Naive thymus-derived CD4-positive, alpha-beta T cell (primary cell): ENCODE measurements at regions of chrX and their contacts with region 1.

Region 1: DNA sequence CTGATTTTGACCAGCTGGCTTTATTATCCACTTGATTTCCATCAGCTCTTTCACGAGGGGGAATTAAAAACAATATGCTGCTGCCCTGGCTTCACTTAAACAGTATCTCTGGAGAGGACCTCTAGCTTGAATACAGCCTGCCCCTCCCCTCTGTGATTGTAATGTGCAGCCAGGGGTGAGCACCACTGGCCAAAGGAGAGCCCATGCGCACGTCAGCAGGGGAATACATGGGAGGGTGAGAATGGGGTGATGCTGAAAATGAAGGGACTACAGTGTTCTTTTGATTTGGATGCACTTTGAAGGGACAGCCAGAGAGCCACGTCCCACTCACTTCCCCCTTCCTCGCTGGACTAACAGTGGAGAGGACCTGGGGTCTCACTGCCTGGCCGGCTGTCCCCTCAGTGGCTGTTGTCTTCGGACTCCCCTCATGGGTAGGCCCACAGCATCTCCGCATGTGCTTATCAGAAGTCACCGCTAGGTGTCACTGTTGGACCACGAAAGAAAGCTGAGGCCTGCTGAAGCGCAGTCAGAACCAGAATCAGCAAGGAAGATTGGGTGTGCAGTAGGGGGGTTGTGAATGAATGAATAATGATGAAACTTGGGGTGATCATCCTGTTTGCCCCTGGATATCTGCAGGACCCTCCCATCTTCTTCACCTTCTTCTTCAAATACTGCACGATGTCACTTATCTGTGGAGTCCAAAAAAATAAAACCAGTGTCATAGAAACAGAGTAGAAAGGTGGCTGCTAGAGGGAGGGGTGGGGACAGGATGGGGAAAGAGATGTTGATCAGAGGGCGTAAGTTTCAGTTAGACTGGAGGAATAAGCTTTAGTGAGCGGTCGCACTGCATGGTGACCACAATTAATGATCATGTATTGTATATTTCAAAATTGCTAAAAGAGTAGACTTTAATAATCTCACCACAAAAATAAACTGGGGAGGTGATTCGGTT is 32.8 kb downstream of the CLCN4 start:
- DNase-seq: peak; percentile 35 to 78 (median 64)
- ATAC-seq: peak; percentile 77
- H3K4me3 ChIP-seq: no peak overlapping the region
- H3K4me3 Mint-ChIP-seq: no peak overlapping the region
- H3K27ac ChIP-seq: no peak overlapping the region
- H3K27ac Mint-ChIP-seq: peak overlapping the region in 1 of 9 donors; percentile 28
- H3K4me1 ChIP-seq: no peaks in the 10 kb centered on the region
- H3K4me1 Mint-ChIP-seq: peaks cover 0 to 4% (median 0%) of the 10 kb centered on the region in 7 donors
- H3K27me3 ChIP-seq: no peaks in the 10 kb centered on the region
- H3K27me3 Mint-ChIP-seq: peaks cover 0 to 13% (median 4%) of the 10 kb centered on the region in 5 donors

Region 2: DNA sequence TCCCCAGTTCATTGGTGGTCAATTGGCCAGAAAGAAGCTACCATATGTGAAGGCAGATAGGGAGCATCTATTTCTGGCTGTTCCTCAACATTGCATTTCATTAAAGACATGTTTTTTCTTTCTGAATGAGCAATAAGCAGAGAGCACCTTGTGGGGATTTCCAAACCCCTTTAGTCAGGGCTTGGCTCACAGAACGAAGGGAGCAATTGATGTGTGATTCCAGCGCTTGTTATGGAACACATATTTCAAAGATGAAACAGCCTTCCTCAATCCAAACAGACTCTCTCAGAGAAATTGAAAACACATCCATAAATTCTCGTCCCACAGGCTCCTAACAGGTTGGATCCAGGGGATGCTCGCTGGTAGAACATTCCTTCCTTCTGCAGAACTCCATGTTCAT is 51.3 kb after region 1 on chrX:
- CTCF ChIA-PET with region 1: no interaction called
- POLR2A ChIA-PET with region 1: no interaction called
- intact Hi-C with region 1: no loop called
- DNase-seq: no peak
- ATAC-seq: no peak
- H3K4me3 ChIP-seq: no peak overlapping the region
- H3K4me3 Mint-ChIP-seq: no peak overlapping the region
- H3K27ac ChIP-seq: no peak overlapping the region
- H3K27ac Mint-ChIP-seq: no peak overlapping the region
- H3K4me1 ChIP-seq: no peaks in the 10 kb centered on the region
- H3K4me1 Mint-ChIP-seq: no peaks in the 10 kb centered on the region
- H3K27me3 ChIP-seq: no peaks in the 10 kb centered on the region
- H3K27me3 Mint-ChIP-seq: peaks cover 0 to 6% (median 0%) of the 10 kb centered on the region in 5 donors

Region 3: DNA sequence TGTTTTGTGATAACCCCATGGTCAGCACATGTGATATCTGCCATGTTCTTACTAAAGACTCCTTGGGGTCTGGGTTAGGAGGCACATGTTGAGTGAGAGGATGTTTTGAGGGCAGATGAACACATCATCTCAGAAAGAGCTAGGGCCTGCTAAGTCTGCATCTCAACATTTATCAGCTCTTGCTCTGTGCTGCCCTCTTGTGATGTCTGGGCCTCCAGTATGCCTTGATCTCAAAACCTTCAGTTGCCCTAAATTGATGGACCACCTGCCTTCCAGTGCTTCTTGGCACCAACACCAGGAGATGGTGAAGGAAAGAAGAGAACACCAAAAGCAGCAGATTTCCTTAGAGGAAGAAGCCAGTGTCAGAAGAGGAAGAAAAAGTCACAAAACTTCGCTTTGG is 408.3 kb after region 1 on chrX:
- CTCF ChIA-PET with region 1: no interaction called
- POLR2A ChIA-PET with region 1: no interaction called
- intact Hi-C with region 1: loop called in 1 of 2 experiments (anchors 1 kb)
- DNase-seq: no peak
- ATAC-seq: no peak
- H3K4me3 ChIP-seq: no peak overlapping the region
- H3K4me3 Mint-ChIP-seq: no peak overlapping the region
- H3K27ac ChIP-seq: no peak overlapping the region
- H3K27ac Mint-ChIP-seq: no peak overlapping the region
- H3K4me1 ChIP-seq: no peaks in the 10 kb centered on the region
- H3K4me1 Mint-ChIP-seq: no peaks in the 10 kb centered on the region
- H3K27me3 ChIP-seq: peaks cover 0 to 3% of the 10 kb centered on the region in 2 donors
- H3K27me3 Mint-ChIP-seq: no peaks in the 10 kb centered on the region

Region 4: GRCh38 chrX:10615931-10616775 is 426.6 kb after region 1 on chrX:
- CTCF ChIA-PET with region 1: no interaction called
- POLR2A ChIA-PET with region 1: no interaction called
- intact Hi-C with region 1: loop called (anchors 1 to 5 kb)
- DNase-seq: no peak
- ATAC-seq: no peak
- H3K4me3 ChIP-seq: no peak overlapping the region
- H3K4me3 Mint-ChIP-seq: no peak overlapping the region
- H3K27ac ChIP-seq: no peak overlapping the region
- H3K27ac Mint-ChIP-seq: no peak overlapping the region
- H3K4me1 ChIP-seq: no peaks in the 10 kb centered on the region
- H3K4me1 Mint-ChIP-seq: peaks cover 4 to 18% (median 11%) of the 10 kb centered on the region in 7 donors
- H3K27me3 ChIP-seq: no peaks in the 10 kb centered on the region
- H3K27me3 Mint-ChIP-seq: peaks cover 20 to 37% (median 23%) of the 10 kb centered on the region in 5 donors

Region 5: GRCh38 chrX:10722851-10723250 is 533.3 kb after region 1 on chrX:
- CTCF ChIA-PET with region 1: interaction called, 6 read pairs
- POLR2A ChIA-PET with region 1: no interaction called
- intact Hi-C with region 1: loop called in 1 of 2 experiments (anchors 1 kb)
- DNase-seq: peak in 6 of 9 donors; percentile 0 to 22 (median 16)
- ATAC-seq: no peak
- H3K4me3 ChIP-seq: no peak overlapping the region
- H3K4me3 Mint-ChIP-seq: no peak overlapping the region
- H3K27ac ChIP-seq: no peak overlapping the region
- H3K27ac Mint-ChIP-seq: no peak overlapping the region
- H3K4me1 ChIP-seq: no peaks in the 10 kb centered on the region
- H3K4me1 Mint-ChIP-seq: no peaks in the 10 kb centered on the region
- H3K27me3 ChIP-seq: no peaks in the 10 kb centered on the region
- H3K27me3 Mint-ChIP-seq: no peaks in the 10 kb centered on the region

Region 6: DNA sequence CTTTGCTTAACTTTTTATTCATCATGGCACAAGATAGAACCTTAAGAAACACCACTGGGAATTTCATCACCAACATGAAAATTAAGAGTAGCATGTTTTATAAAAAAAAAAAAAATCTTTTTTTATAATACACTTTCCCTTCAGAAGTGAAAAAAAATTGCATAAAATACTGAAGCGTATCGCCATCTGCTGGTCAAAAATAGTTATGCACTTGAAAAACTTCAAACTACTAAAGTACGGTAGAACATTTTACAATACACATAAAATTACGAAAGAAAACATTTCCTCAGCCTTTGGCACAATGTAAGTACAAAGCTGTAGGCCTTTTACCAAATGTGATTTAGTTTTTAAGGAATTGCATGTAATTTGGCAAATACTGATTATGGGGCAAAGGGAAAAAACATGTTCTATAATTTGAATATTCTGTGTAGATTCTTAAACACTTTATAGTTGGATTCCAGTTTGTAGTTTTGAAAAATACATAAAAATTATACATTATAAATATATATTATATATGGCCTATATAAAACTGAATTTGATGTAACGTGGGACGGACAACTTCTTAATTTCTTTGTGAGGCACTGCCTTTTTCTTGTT is 948.0 kb after region 1 on chrX:
- CTCF ChIA-PET with region 1: interaction called, 18 read pairs
- POLR2A ChIA-PET with region 1: no interaction called
- intact Hi-C with region 1: loop called in 1 of 2 experiments (anchors 1 kb)
- DNase-seq: peak in 5 of 9 donors; percentile 21 to 33 (median 29)
- ATAC-seq: no peak
- H3K4me3 ChIP-seq: no peak overlapping the region
- H3K4me3 Mint-ChIP-seq: no peak overlapping the region
- H3K27ac ChIP-seq: no peak overlapping the region
- H3K27ac Mint-ChIP-seq: no peak overlapping the region
- H3K4me1 ChIP-seq: no peaks in the 10 kb centered on the region
- H3K4me1 Mint-ChIP-seq: peaks cover 0 to 4% (median 0%) of the 10 kb centered on the region in 7 donors
- H3K27me3 ChIP-seq: no peaks in the 10 kb centered on the region
- H3K27me3 Mint-ChIP-seq: peaks cover 0 to 6% (median 4%) of the 10 kb centered on the region in 5 donors

Region 7: DNA sequence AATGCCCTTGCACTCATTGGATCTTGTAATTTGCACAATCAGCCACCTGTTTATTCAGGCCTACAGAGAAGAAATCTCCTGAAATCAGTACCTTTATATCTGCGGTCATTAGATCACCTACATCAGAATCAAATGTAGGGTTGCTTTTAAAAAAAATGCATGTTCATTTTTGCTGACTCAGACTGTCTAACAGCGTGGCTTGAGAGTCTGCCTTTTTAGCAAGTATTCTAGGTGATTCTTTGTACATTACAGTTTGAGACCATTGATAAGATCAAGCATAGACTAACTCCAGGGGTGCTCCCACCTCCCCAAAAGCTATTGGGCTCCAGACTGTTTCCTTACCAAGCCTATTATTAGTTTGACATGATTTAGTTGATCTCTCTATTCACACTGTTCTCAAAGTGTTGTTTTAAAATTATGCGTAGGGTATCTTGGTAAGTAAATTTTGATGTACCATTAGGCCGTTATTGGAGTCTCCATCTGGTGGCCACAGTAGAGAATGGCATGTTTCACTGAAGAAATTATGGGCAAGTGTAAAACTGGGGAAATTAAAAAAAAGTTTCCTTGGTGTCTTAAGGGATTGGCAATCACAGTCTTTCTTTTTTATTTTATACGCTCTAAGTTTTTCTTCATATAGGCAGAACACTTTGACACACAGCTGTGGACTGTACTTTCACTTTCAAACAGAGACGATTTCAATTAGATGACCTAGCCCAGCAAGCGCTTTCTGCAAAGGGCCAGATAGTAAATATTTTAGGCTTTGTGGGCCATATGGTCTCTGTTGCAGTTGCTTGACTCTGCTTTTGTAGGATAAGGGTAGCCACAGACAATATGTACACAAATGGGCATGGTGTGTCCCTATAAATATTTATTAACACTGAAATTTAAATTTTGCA is 1534.8 kb after region 1 on chrX:
- CTCF ChIA-PET with region 1: no interaction called
- POLR2A ChIA-PET with region 1: no interaction called
- intact Hi-C with region 1: loop called in 1 of 2 experiments (anchors 5 kb)
- DNase-seq: peak in 6 of 9 donors; percentile 2 to 41 (median 34)
- ATAC-seq: peak; percentile 51
- H3K4me3 ChIP-seq: no peak overlapping the region
- H3K4me3 Mint-ChIP-seq: peak overlapping the region in 1 of 10 donors; percentile 27
- H3K27ac ChIP-seq: no peak overlapping the region
- H3K27ac Mint-ChIP-seq: peak overlapping the region in 1 of 9 donors; percentile 24
- H3K4me1 ChIP-seq: no peaks in the 10 kb centered on the region
- H3K4me1 Mint-ChIP-seq: peaks cover 0 to 5% (median 0%) of the 10 kb centered on the region in 7 donors
- H3K27me3 ChIP-seq: no peaks in the 10 kb centered on the region
- H3K27me3 Mint-ChIP-seq: no peaks in the 10 kb centered on the region